Panc1 (cell line): ENCODE measurements at regions of chr20 and their contacts with region 1.

Region 1: GRCh38 chr20:8131598-8132483 is at the start of gene PLCB1:
- DNase-seq: peak; percentile 20
- ATAC-seq: peak; percentile 98
- H3K4me3 ChIP-seq: peak within 1 kb of the TSS; percentile 33 to 44; a peak in 3 of 4 replicates
- H3K27ac ChIP-seq: no peak within 1 kb of the TSS
- H3K4me1 ChIP-seq: peaks cover 3% of the 10 kb centered on the region; the same call in 1 of the 2 replicates
- H3K27me3 ChIP-seq: peaks cover 18% of the 10 kb centered on the region
- CTCF ChIP-seq: peak; percentile 91
- total RNA-seq, gene PLCB1: 0.59 TPM

Region 2: DNA sequence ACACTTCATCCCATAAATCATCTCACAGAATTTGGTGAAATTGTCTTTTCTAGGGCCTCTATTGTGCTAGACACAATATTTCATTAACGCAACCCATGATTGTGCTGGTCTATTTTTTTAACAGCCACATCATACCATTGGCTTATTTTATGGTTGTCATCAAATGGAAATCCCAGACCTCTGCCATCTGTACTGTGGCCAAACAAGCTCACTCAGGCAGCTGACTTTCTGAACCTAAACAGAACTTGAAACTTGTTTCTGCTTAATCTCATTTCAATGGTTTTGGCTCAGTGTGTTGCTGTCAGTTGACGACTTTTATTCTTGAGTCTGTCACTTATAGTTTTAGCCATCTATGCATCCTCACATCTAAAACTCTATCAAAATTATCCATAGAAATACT is 303.4 kb before region 1 on chr20:
- CTCF ChIA-PET with region 1: no interaction called
- POLR2A ChIA-PET with region 1: no interaction called
- in situ Hi-C with region 1: no loop called
- intact Hi-C with region 1: no loop called
- DNase-seq: no peak
- ATAC-seq: no peak
- H3K4me3 ChIP-seq: no peak overlapping the region
- H3K27ac ChIP-seq: no peak overlapping the region
- H3K4me1 ChIP-seq: no peaks in the 10 kb centered on the region
- H3K27me3 ChIP-seq: no peaks in the 10 kb centered on the region
- CTCF ChIP-seq: no peak

Region 3: GRCh38 chr20:7935027-7935551 is 196.8 kb before region 1 on chr20:
- CTCF ChIA-PET with region 1: interaction called, 11 read pairs
- POLR2A ChIA-PET with region 1: no interaction called
- in situ Hi-C with region 1: no loop called
- intact Hi-C with region 1: no loop called
- DNase-seq: no peak
- ATAC-seq: no peak
- H3K4me3 ChIP-seq: no peak overlapping the region
- H3K27ac ChIP-seq: no peak overlapping the region
- H3K4me1 ChIP-seq: no peaks in the 10 kb centered on the region
- H3K27me3 ChIP-seq: no peaks in the 10 kb centered on the region
- CTCF ChIP-seq: no peak

Region 4: GRCh38 chr20:8389381-8390036 is 257.7 kb after region 1 on chr20:
- CTCF ChIA-PET with region 1: no interaction called
- POLR2A ChIA-PET with region 1: no interaction called
- in situ Hi-C with region 1: no loop called
- intact Hi-C with region 1: loop called (anchors 5 kb)
- DNase-seq: peak; percentile 1
- ATAC-seq: no peak
- H3K4me3 ChIP-seq: no peak overlapping the region
- H3K27ac ChIP-seq: no peak overlapping the region
- H3K4me1 ChIP-seq: no peaks in the 10 kb centered on the region
- H3K27me3 ChIP-seq: no peaks in the 10 kb centered on the region
- CTCF ChIP-seq: peak; percentile 58